Activated B cell treated with CpG ODN at 0.5 μM for 24 hours (primary cell): ENCODE measurements at regions of chr13 and their contacts with region 1.

Region 1: GRCh38 chr13:49443704-49444523 is at the starts of genes CAB39L and SETDB2:
- DNase-seq: peak; percentile 94
- ATAC-seq: peak; percentile 91
- H3K4me3 Mint-ChIP-seq: peak within 1 kb of the TSS; percentile 94
- H3K27ac Mint-ChIP-seq: peak within 1 kb of the TSS; percentile 99
- H3K4me1 Mint-ChIP-seq: peaks cover 72% of the 10 kb centered on the region
- H3K27me3 Mint-ChIP-seq: no peaks in the 10 kb centered on the region
- CTCF ChIP-seq: no peak
- total RNA-seq, gene CAB39L: 3.4 and 4.0 TPM in 2 replicates
- total RNA-seq, gene SETDB2: 23.6 and 25.1 TPM in 2 replicates

Region 2: DNA sequence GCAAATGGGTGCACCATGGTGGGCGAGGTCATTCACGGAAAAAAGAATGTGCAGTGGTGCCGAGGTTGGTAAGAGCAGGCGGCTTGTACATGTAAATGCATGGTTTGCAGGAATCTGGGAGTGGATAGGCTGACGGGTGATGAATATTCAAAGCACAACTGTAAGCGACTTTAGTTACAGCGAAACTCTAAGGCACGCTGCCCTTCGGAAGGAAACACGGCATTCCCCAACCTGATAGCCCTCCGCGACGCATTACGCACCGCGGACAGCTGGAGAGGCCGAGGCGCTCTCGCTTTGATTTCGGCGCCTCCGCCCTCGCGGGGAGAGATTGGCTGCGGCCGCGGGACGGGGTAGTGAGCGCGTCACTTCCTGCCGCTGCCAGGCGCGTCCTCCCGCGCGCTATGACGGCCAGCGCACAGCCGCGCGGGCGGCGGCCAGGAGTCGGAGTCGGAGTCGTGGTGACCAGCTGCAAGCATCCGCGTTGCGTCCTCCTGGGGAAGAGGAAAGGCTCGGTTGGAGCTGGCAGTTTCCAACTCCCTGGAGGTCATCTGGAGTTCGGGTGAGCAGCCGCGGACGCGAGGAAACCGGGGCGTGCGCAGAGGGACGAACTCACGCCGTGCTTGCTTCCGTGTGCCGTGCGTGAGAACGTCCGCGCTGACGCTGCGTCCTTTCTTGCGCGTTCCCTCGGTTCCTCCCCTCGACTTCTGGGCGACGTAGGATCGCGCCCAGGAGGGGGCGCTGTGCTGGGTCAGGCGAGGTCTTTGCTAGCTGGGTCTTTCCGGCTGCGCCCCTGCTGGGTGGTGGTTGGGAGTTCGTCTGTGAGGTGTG is 1406.4 kb before region 1 on chr13 and contains the start of gene NUDT15:
- CTCF ChIA-PET with region 1: no interaction called
- POLR2A ChIA-PET with region 1: no interaction called
- intact Hi-C with region 1: loop called (anchors 5 kb)
- DNase-seq: peak; percentile 92
- ATAC-seq: peak; percentile 94
- H3K4me3 Mint-ChIP-seq: peak within 1 kb of the TSS; percentile 93
- H3K27ac Mint-ChIP-seq: peak within 1 kb of the TSS; percentile 96
- H3K4me1 Mint-ChIP-seq: peaks cover 29% of the 10 kb centered on the region
- H3K27me3 Mint-ChIP-seq: no peaks in the 10 kb centered on the region
- CTCF ChIP-seq: peak; percentile 83
- total RNA-seq, gene NUDT15: 5.5 and 6.2 TPM in 2 replicates

Region 3: GRCh38 chr13:49300739-49301589 is 142.9 kb before region 1 on chr13:
- CTCF ChIA-PET with region 1: no interaction called
- POLR2A ChIA-PET with region 1: interaction called, 6 read pairs
- intact Hi-C with region 1: loop called (anchors 1 kb)
- DNase-seq: peak; percentile 43
- ATAC-seq: peak; percentile 98
- H3K4me3 Mint-ChIP-seq: peak overlapping the region; percentile 80
- H3K27ac Mint-ChIP-seq: peak overlapping the region; percentile 72
- H3K4me1 Mint-ChIP-seq: peaks cover 33% of the 10 kb centered on the region
- H3K27me3 Mint-ChIP-seq: no peaks in the 10 kb centered on the region
- CTCF ChIP-seq: no peak

Region 4: DNA sequence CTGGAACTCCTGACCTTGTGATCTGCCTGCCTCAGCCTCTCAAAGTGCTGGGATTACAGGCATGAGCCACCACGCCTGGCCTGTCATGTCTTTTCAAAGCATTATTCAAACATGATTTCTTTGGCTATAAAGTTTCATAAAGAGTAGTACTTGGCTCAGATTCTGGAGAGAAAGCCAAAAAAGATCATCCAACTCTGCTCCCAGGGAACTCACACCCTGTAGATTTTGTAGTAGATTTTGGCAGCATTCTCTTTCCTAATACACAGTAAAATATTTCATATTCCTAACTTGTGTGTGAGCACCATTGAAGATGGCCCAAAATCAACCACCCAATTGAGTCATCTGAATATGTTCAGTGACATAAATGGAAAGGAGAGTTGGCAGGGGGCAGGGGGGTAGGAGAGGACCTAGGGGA is 48.5 kb before region 1 on chr13:
- CTCF ChIA-PET with region 1: no interaction called
- POLR2A ChIA-PET with region 1: no interaction called
- intact Hi-C with region 1: no loop called
- DNase-seq: no peak
- ATAC-seq: no peak
- H3K4me3 Mint-ChIP-seq: no peak overlapping the region
- H3K27ac Mint-ChIP-seq: no peak overlapping the region
- H3K4me1 Mint-ChIP-seq: no peaks in the 10 kb centered on the region
- H3K27me3 Mint-ChIP-seq: no peaks in the 10 kb centered on the region
- CTCF ChIP-seq: no peak

Region 5: DNA sequence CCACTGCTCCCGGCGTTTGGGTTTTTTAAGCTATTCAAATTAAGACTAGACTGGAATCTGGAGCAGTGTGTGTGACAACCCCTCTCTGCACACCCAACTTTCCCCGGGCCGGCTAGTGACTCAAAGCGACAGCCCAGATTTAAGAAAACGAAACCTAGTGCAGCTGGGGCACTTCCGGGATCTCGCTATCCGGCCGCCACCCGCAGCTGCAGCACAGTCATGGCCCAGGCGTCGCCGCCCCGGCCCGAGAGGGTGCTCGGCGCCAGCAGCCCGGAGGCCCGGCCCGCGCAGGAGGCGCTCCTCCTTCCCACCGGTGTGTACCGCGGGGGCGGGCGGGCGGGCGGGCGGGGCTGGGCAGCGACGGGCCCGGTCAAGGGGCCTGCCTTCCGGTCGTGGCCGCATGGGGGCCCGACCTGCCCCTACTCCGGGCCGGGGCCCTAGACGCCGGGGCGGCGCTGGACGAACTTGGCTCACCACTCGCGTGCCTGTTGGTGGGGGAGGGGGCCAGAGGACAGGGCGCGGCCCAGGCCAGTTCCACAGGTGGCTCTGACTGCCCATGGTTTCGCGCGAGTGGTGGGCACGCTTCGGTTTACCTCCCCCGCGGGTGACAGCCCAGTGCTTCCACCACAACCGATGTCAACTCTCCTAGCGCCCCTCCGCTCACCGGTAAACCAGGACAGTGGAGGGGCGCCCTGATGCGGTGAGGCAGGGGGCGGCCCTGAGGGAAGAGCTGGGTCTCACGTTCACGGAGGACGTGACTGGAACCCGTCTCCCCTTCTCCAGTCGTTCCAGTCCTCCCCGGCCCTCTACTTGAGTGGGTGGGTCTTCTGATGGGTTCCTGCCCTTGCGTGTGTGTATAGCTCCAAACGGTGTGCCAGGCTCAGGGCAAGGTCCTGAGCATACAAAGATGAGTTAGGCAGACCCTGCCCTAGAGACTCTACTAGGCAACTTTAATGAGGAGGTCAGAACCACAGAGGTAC is 52.2 kb after region 1 on chr13 and contains the start of gene PHF11:
- CTCF ChIA-PET with region 1: no interaction called
- POLR2A ChIA-PET with region 1: interaction called, 85 read pairs
- intact Hi-C with region 1: loop called (anchors 1 kb)
- DNase-seq: peak; percentile 78
- ATAC-seq: peak; percentile 82
- H3K4me3 Mint-ChIP-seq: peak within 1 kb of the TSS; percentile 98
- H3K27ac Mint-ChIP-seq: peak within 1 kb of the TSS; percentile 100
- H3K4me1 Mint-ChIP-seq: peaks cover 44% of the 10 kb centered on the region
- H3K27me3 Mint-ChIP-seq: no peaks in the 10 kb centered on the region
- CTCF ChIP-seq: no peak
- total RNA-seq, gene PHF11: 128 and 148 TPM in 2 replicates

Region 6: DNA sequence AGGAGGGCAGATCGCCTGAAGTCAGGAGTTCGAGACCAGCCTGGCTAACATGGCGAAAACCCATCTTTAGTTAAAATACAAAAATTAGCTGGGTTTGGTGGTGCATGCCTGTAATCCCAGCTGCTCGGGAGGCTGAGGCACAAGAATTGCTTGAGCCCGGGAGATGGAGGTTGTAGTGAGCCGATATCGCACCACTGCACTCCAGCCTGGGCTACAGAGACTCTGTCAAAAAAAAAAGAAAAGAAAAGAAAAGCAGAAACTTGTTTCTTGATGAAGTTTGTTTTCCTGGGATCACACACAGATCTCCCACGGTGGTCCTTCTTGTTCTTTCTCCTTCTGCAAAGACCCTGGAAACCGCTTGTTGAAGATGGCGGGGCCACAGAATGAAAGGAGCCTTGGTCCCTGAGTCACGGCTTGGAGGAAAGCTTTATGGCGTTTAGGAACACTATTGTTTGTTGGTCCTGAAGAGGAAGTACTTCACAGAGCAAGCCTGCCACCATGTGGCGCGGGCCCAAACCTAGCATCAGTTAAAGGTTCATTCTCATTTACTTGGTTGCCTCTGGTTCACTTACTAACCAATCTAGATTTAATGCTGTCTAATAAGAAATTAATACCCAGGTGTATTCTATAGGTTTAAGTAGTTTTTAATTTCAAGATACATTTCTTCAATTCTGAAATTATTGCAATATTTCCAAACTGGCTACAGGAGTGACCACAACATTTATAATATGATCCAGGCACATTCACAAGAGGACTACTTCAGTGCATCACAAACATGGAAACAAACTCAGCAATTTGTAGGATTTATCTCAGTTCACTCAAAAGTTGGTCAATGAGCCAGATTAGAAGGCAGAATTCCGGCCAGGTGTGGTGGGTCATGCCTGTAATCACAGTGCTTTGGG is 163.1 kb after region 1 on chr13:
- CTCF ChIA-PET with region 1: interaction called, 18 read pairs
- POLR2A ChIA-PET with region 1: interaction called, 9 read pairs
- intact Hi-C with region 1: no loop called
- DNase-seq: peak; percentile 64
- ATAC-seq: peak; percentile 96
- H3K4me3 Mint-ChIP-seq: peak overlapping the region; percentile 81
- H3K27ac Mint-ChIP-seq: peak overlapping the region; percentile 79
- H3K4me1 Mint-ChIP-seq: peaks cover 26% of the 10 kb centered on the region
- H3K27me3 Mint-ChIP-seq: no peaks in the 10 kb centered on the region
- CTCF ChIP-seq: no peak

Region 7: DNA sequence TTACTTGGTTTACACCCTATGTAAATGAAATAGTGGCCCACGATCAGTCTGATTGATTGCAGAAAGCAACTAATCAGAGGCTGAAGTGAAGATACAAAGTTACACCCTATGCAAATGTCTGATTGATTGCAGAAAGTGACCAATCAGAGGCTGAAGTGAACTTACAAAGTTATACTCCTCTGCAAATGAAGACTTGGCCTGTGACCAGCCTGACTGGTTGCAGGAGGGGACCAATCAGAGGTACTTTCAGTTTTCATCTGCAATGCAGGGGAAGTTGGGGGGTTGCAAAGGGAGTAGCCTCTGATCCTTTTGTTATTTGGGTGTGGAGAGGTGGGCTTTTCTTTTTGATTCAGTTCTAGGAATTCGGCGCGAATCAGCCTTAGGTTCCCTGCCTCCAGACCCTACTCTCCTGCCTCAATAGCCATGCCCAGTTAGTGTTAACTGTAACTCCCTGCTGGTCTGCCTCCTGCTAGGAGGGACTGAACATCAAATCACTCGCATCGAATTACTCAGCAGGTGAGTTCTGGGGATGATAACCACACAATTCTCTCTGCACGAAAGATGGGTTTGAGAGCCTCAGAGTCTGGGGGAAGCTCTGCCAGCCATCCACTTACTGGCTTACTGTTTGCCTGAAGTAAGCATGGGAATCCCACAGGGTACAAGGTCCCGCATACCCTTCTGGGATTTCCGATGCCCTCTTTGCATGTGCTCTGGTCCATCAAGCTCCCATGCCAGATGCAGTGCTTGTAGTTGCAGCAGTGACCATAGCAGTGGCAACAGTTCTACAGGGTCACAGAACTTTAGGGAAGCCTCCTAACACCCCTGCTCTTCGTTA is 191.9 kb after region 1 on chr13:
- CTCF ChIA-PET with region 1: no interaction called
- POLR2A ChIA-PET with region 1: no interaction called
- intact Hi-C with region 1: no loop called
- DNase-seq: no peak
- ATAC-seq: peak; percentile 86
- H3K4me3 Mint-ChIP-seq: peak overlapping the region; percentile 73
- H3K27ac Mint-ChIP-seq: peak overlapping the region; percentile 75
- H3K4me1 Mint-ChIP-seq: peaks cover 52% of the 10 kb centered on the region
- H3K27me3 Mint-ChIP-seq: no peaks in the 10 kb centered on the region
- CTCF ChIP-seq: no peak

Region 8: GRCh38 chr13:49936085-49936940 is 492.4 kb after region 1 on chr13 and contains the start of gene SPRYD7:
- CTCF ChIA-PET with region 1: no interaction called
- POLR2A ChIA-PET with region 1: interaction called, 9 read pairs
- intact Hi-C with region 1: loop called (anchors 1 kb)
- DNase-seq: peak; percentile 100
- ATAC-seq: peak; percentile 98
- H3K4me3 Mint-ChIP-seq: peak within 1 kb of the TSS; percentile 97
- H3K27ac Mint-ChIP-seq: peak within 1 kb of the TSS; percentile 91
- H3K4me1 Mint-ChIP-seq: peaks cover 32% of the 10 kb centered on the region
- H3K27me3 Mint-ChIP-seq: no peaks in the 10 kb centered on the region
- CTCF ChIP-seq: no peak
- total RNA-seq, gene SPRYD7: 3.7 and 4.5 TPM in 2 replicates